ENCODE measurements at regions of chr7 and their contacts with region 1.

Region 1: DNA sequence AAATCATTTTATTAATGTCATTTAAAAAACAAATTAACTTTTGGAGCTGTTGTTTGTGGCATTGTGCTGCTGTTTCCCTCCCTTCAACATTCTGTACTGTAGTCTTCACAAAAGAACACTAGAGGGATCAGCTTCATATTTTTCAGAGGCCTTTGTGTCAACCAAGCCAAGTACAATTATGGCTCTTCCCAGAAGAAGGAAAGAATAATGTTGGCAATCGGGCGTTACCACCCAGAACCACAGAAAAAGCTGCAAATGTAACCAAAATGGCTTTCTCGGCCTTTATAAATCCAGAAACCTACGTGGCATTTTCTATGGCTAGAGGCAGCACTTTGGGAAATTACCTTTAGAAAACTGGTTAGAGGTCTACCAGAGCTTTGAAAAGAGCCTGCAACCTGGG is 98.8 kb upstream of the COL1A2 start:
- DNase-seq: peak; percentile 75
- H3K4me3 ChIP-seq: no peak overlapping the region
- H3K27ac ChIP-seq: no peak overlapping the region
- H3K4me1 ChIP-seq: peaks cover 2% of the 10 kb centered on the region
- H3K27me3 ChIP-seq: no peaks in the 10 kb centered on the region
- CTCF ChIP-seq: peak; percentile 35 to 50
- POLR2A ChIP-seq: no peak

Region 2: DNA sequence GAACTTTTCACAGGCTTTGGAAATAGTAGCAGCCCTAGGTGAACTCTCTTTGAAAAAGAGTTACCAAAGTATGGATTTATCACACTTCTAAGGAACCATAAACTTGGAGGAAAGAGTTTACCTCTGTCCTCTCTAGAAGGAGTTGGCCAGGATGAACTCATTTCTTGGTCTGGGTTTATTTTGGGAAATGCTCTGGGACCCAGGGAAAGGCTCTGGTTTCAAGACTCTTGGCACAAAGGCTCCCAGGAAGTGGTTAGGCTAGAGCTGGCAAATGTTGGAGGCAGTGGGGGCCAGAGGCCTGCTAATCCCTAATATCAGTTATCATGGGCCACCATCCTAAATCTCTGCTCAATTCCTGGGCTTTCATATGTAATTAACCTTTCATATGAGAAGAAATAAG is 1423.1 kb before region 1 on chr7:
- CTCF ChIA-PET with region 1: no interaction called
- POLR2A ChIA-PET with region 1: no interaction called
- dilution Hi-C with region 1: no loop called
- intact Hi-C with region 1: no loop called
- DNase-seq: no peak
- H3K4me3 ChIP-seq: no peak overlapping the region
- H3K27ac ChIP-seq: no peak overlapping the region
- H3K4me1 ChIP-seq: peaks cover 18% of the 10 kb centered on the region
- H3K27me3 ChIP-seq: no peaks in the 10 kb centered on the region
- CTCF ChIP-seq: no peak
- POLR2A ChIP-seq: no peak

Region 3: GRCh38 chr7:94368371-94368791 is 72.5 kb after region 1 on chr7:
- CTCF ChIA-PET with region 1: interaction called, 30 read pairs
- POLR2A ChIA-PET with region 1: interaction called, 7 read pairs
- dilution Hi-C with region 1: no loop called
- intact Hi-C with region 1: loop called (anchors 1 kb)
- DNase-seq: peak; percentile 97
- H3K4me3 ChIP-seq: peak overlapping the region in 1 of 3 experiments; percentile 30
- H3K27ac ChIP-seq: peak overlapping the region; percentile 88
- H3K4me1 ChIP-seq: peaks cover 15% of the 10 kb centered on the region
- H3K27me3 ChIP-seq: no peaks in the 10 kb centered on the region
- CTCF ChIP-seq: no peak
- POLR2A ChIP-seq: no peak

Region 4: DNA sequence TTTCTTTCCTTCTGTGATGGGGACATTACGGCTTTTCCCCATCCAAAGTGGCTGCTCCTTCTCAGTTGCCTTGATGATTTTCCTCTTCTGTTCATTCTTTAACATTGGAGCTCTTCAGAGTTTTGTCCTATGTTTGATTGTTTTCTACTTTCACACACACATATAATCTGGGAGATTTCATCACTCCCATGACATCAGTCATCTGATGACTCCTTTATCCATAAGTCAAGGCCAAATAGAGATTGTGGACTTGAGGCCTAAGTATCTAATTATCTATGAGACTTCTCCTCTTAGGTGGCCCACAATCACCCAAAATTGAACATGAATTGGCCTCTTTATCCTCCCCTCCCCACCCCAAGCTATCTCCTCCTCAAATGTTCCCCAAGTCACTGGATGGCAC is 93.5 kb after region 1 on chr7:
- CTCF ChIA-PET with region 1: interaction called, 868 read pairs
- POLR2A ChIA-PET with region 1: no interaction called
- dilution Hi-C with region 1: no loop called
- intact Hi-C with region 1: no loop called
- DNase-seq: no peak
- H3K4me3 ChIP-seq: no peak overlapping the region
- H3K27ac ChIP-seq: no peak overlapping the region
- H3K4me1 ChIP-seq: no peaks in the 10 kb centered on the region
- H3K27me3 ChIP-seq: no peaks in the 10 kb centered on the region
- CTCF ChIP-seq: no peak
- POLR2A ChIP-seq: no peak

Region 5: GRCh38 chr7:94436018-94436604 is 140.3 kb after region 1 on chr7:
- CTCF ChIA-PET with region 1: interaction called, 276 read pairs
- POLR2A ChIA-PET with region 1: no interaction called
- dilution Hi-C with region 1: loop called (anchors 25 kb)
- intact Hi-C with region 1: no loop called
- DNase-seq: peak; percentile 69
- H3K4me3 ChIP-seq: no peak overlapping the region
- H3K27ac ChIP-seq: no peak overlapping the region
- H3K4me1 ChIP-seq: no peaks in the 10 kb centered on the region
- H3K27me3 ChIP-seq: peaks cover 0 to 4% of the 10 kb centered on the region in 2 experiments
- CTCF ChIP-seq: peak; percentile 73 to 83
- POLR2A ChIP-seq: no peak

Region 6: GRCh38 chr7:95045236-95045923 is 749.5 kb after region 1 on chr7:
- CTCF ChIA-PET with region 1: no interaction called
- POLR2A ChIA-PET with region 1: no interaction called
- dilution Hi-C with region 1: no loop called
- intact Hi-C with region 1: loop called (anchors 10 kb)
- DNase-seq: peak; percentile 45
- H3K4me3 ChIP-seq: no peak overlapping the region
- H3K27ac ChIP-seq: no peak overlapping the region
- H3K4me1 ChIP-seq: no peaks in the 10 kb centered on the region
- H3K27me3 ChIP-seq: no peaks in the 10 kb centered on the region
- CTCF ChIP-seq: peak; percentile 10 to 27
- POLR2A ChIP-seq: no peak

Measured in endothelial cell of umbilical vein (primary cell).